Dendritic cell treated with granulocyte-macrophage colony-stimulating factor and Interleukin-4, amounts not matched to agents 40 ng/mL and 50 ng/mL, for 4 days (primary cell): ENCODE measurements at regions of chr9 and their contacts with region 1.

Region 1: DNA sequence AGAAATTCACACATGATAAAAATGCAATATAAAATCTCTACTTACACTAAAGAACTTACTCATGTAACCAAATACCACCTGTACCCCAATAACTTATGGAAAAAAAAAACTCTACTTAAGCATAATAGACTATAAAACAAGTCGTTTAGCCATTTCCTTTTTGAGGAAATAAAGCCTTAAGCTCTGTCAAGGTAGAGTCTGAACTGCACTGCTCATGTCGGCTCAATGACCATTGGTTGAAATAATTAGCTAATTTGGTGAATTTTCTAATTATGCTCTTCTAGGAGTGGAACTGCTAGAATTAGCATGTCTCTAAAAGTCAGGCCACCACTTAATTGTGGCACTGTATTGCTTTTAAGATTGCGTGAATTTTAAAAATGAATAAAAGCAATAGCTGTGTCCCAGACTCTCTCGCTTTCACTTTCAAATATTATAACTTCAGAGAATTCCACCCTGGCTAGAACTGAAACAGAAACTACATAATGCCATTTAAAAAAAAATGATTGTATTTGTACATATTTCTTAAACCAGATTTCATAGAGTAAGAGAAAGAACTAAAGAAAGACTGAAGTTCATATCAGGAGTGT is 113.0 kb upstream of the PCA3 start:
- H3K4me3 Mint-ChIP-seq: peak overlapping the region; percentile 65
- H3K27ac Mint-ChIP-seq: peak overlapping the region; percentile 87
- H3K4me1 Mint-ChIP-seq: peaks cover 60% of the 10 kb centered on the region
- H3K27me3 Mint-ChIP-seq: no peaks in the 10 kb centered on the region

Region 2: DNA sequence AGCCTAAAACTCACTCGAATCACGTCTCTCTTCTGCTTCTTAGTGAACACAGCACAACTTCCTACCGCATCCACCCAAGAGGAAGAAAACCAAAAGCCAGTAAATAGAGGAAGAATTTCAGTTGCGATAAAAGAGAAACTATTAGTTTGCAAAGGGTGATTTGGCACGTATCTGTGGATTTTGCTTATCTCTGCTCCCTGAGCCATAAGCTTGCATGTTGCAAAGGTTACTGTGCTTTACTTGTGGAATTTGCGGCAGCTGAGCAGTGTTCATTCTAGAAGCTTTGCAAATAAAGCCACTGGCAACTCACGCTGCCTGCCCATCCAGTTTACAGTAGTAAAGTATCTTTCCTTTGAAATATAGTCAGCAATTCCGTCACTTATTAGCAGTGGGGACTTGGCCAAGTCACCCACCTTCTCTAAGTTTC is 36.0 kb before region 1 on chr9:
- intact Hi-C with region 1: loop called (anchors 5 kb)
- H3K4me3 Mint-ChIP-seq: peak overlapping the region; percentile 64
- H3K27ac Mint-ChIP-seq: peak overlapping the region; percentile 83
- H3K4me1 Mint-ChIP-seq: peaks cover 72% of the 10 kb centered on the region
- H3K27me3 Mint-ChIP-seq: no peaks in the 10 kb centered on the region